Esophagus muscularis mucosa (tissue), 4 donors: ENCODE measurements at regions of chr3 and their contacts with region 1.

Region 1: DNA sequence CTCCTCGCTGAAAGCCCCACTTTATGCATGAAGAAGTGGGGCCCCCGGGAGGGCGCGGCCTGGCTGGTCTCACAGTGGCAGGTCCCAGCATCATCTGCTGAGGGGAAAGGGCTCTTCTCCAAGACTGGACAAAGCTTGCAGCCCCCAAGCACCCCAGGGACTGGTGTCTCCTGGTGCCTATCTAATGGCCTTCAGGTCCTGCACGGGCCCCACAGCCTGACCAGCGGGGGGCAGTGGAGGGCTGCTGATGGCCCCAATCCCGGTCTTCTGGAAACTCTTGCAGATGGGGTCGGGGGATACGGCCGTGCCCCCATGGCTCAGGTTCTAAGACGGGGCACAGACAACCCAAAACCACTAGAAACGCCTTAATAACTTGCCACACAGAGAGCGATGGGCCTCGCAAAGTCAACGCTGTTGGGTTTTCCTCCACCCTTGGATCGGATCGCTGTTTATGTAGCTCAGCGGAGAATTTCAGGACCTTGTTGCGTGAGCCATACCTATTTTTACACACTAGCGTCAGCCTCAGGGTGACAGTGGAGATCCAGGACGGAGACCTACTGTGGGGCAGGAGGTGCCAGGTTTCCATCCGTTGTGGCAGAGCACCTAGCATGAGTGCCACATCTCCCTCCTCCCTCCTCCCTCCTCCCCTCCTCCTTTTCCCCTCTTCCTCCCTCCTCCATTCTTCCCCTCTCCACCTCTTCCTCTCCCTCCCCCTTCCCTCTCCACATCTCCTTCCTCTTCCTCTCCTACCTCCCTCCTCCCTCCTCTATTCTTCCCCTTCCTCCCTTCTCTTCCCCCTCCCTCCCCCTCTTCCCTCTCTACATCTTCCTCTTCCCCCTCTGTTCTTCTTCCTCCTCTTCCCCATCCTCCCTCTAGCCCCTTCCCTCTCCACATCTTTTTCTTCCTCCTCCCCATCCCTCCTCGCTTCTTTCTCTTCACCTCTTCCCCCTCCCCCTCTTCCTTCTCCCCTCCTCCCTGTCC is 79.3 kb upstream of the ALDH1L1 start:
- DNase-seq: peak; percentile 92
- H3K4me3 ChIP-seq: peak overlapping the region; percentile 27 to 49 (median 36)
- H3K27ac ChIP-seq: peak overlapping the region; percentile 52 to 75 (median 64)
- H3K4me1 ChIP-seq: peaks cover 11 to 30% (median 26%) of the 10 kb centered on the region in 4 donors
- H3K27me3 ChIP-seq: no peaks in the 10 kb centered on the region
- CTCF ChIP-seq: peak; percentile 78 to 90 (median 88)
- EP300 ChIP-seq: peak; percentile 42
- POLR2A ChIP-seq: no peak

Region 2: GRCh38 chr3:126087552-126088175 is 172.0 kb before region 1 on chr3:
- intact Hi-C with region 1: no loop called
- DNase-seq: no peak
- H3K4me3 ChIP-seq: no peak overlapping the region
- H3K27ac ChIP-seq: no peak overlapping the region
- H3K4me1 ChIP-seq: peaks cover 0 to 18% (median 16%) of the 10 kb centered on the region in 4 donors
- H3K27me3 ChIP-seq: no peaks in the 10 kb centered on the region
- CTCF ChIP-seq: no peak
- EP300 ChIP-seq: no peak
- POLR2A ChIP-seq: no peak

Region 3: GRCh38 chr3:126216416-126216815 is 43.3 kb before region 1 on chr3:
- intact Hi-C with region 1: no loop called
- DNase-seq: no peak
- H3K4me3 ChIP-seq: no peak overlapping the region
- H3K27ac ChIP-seq: no peak overlapping the region
- H3K4me1 ChIP-seq: peaks cover 16 to 20% (median 19%) of the 10 kb centered on the region in 4 donors
- H3K27me3 ChIP-seq: no peaks in the 10 kb centered on the region
- CTCF ChIP-seq: no peak
- EP300 ChIP-seq: no peak
- POLR2A ChIP-seq: no peak

Region 4: DNA sequence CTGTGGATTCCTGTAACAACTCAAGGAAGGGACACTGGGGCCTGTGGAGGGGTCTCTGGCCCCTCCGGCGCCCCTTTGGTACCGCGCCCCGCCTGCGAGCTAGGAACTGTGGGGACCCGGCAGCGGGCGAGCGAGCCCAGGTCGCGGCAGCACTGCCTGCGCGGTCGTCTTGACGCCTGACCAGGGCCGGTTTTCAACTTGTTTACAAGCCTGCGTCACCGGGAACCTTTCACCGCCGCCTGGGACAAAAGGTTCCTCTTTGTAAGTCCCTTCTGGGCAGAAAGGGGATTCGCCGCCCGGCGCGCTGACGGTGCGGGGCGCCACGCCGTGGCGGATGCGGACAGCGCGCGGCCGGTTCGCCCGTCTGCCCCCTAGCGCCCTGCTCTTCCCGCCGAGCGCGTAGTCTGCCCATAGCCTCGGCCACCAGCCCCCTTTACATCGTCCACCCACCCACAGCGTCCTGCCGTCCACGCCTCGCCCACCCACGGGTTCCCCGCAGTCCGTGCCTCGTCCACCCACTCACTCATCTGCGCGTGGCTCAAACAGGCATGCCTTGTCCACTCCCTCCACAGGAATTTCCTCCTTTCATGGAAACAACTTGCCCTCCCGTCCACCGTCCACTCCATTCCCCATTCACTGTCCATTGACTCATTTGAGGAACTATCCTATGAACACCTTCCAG is 129.6 kb after region 1 on chr3:
- intact Hi-C with region 1: loop called (anchors 2 kb)
- DNase-seq: peak; percentile 98
- H3K4me3 ChIP-seq: peak overlapping the region; percentile 46 to 55 (median 54)
- H3K27ac ChIP-seq: peak overlapping the region; percentile 85 to 92 (median 88)
- H3K4me1 ChIP-seq: peaks cover 10 to 18% (median 18%) of the 10 kb centered on the region in 4 donors
- H3K27me3 ChIP-seq: peaks cover 0 to 7% (median 2%) of the 10 kb centered on the region in 4 donors
- CTCF ChIP-seq: peak in 2 of 3 experiments; percentile 99
- EP300 ChIP-seq: peak; percentile 96
- POLR2A ChIP-seq: peak; percentile 45